Activated CD4-positive, alpha-beta T cell treated with anti-CD3 and anti-CD28 coated beads, Interleukin-2, amount 10 ng/mL, durations not matched to agents 7 days and 5 days (primary cell): ENCODE measurements at regions of chr1 and their contacts with region 1.

Region 1: GRCh38 chr1:109832945-109833344 is 69.2 kb upstream of the EPS8L3 start:
- DNase-seq: no peak
- H3K4me3 Mint-ChIP-seq: no peak overlapping the region
- H3K27ac Mint-ChIP-seq: no peak overlapping the region
- H3K4me1 Mint-ChIP-seq: no peaks in the 10 kb centered on the region
- H3K27me3 Mint-ChIP-seq: peaks cover 2% of the 10 kb centered on the region

Region 2: DNA sequence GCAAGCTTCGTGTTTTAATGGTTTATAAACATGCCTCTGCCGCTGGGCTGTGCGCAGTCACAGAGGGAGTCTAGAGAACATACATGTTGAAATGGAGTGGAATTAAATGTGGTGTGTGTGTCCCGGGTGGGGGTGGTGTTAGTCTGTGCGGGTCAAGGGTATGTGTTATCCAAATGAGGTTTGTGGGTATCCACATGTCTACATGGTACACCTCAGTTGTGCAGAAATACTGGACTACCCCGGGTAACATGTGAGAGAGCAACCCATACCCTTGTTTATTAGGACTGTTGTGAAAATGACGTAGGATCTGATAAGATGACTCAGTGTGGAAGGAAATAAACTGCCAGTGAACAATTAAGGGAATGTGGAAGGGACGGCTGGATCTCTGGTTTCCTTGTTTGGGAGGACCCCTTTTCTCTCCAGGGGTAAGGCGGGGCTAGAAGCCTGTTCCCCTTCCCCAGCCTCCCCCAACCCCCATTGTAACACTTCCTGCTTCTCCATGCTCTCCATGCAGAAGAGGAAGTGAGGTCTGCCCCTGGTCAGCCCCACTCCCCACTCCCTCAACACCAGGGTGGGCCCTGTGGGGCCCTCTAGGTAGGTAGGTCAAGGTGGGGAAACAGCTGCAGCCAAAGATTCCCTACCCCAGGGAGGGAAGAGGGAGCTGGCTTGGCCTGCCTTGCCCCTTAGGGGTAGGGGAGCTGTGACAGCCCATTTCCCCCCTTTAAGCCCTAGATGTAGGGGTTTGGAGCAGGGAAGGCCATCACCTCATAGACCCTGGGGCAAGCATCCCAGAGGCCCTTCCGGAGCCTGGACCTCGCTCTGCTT is 69.9 kb before region 1 on chr1:
- CTCF ChIA-PET with region 1: no interaction called
- POLR2A ChIA-PET with region 1: no interaction called
- DNase-seq: no peak
- H3K4me3 Mint-ChIP-seq: no peak overlapping the region
- H3K27ac Mint-ChIP-seq: no peak overlapping the region
- H3K4me1 Mint-ChIP-seq: no peaks in the 10 kb centered on the region
- H3K27me3 Mint-ChIP-seq: no peaks in the 10 kb centered on the region

Region 3: GRCh38 chr1:109846162-109846561 is 13.2 kb after region 1 on chr1:
- CTCF ChIA-PET with region 1: interaction called, 11 read pairs
- POLR2A ChIA-PET with region 1: no interaction called
- DNase-seq: no peak
- H3K4me3 Mint-ChIP-seq: no peak overlapping the region
- H3K27ac Mint-ChIP-seq: no peak overlapping the region
- H3K4me1 Mint-ChIP-seq: no peaks in the 10 kb centered on the region
- H3K27me3 Mint-ChIP-seq: no peaks in the 10 kb centered on the region

Region 4: GRCh38 chr1:109864047-109864822 is 31.3 kb after region 1 on chr1:
- CTCF ChIA-PET with region 1: no interaction called
- POLR2A ChIA-PET with region 1: no interaction called
- DNase-seq: no peak
- H3K4me3 Mint-ChIP-seq: no peak overlapping the region
- H3K27ac Mint-ChIP-seq: no peak overlapping the region
- H3K4me1 Mint-ChIP-seq: peaks cover 7% of the 10 kb centered on the region
- H3K27me3 Mint-ChIP-seq: peaks cover 17% of the 10 kb centered on the region

Region 5: GRCh38 chr1:109877320-109877771 is 44.4 kb after region 1 on chr1:
- CTCF ChIA-PET with region 1: no interaction called
- POLR2A ChIA-PET with region 1: no interaction called
- DNase-seq: no peak
- H3K4me3 Mint-ChIP-seq: no peak overlapping the region
- H3K27ac Mint-ChIP-seq: no peak overlapping the region
- H3K4me1 Mint-ChIP-seq: peaks cover 5% of the 10 kb centered on the region
- H3K27me3 Mint-ChIP-seq: peaks cover 11% of the 10 kb centered on the region

Region 6: GRCh38 chr1:109931189-109931731 is 98.3 kb after region 1 on chr1:
- CTCF ChIA-PET with region 1: no interaction called
- POLR2A ChIA-PET with region 1: no interaction called
- DNase-seq: no peak
- H3K4me3 Mint-ChIP-seq: no peak overlapping the region
- H3K27ac Mint-ChIP-seq: no peak overlapping the region
- H3K4me1 Mint-ChIP-seq: peaks cover 6% of the 10 kb centered on the region
- H3K27me3 Mint-ChIP-seq: no peaks in the 10 kb centered on the region